Activated T-helper 1 cell treated with anti-CD3 and anti-CD28 coated beads, Interleukin-12 subunit alpha, Interleukin-12 subunit beta, Interleukin-2, Interleukin-4 antibody, amounts not matched to agents 30 ng/mL and 10 ng/mL and 1 ng/mL, durations not matched to agents 14 hours and 24 hours and 36 hours (primary cell): ENCODE measurements at regions of chr14 and their contacts with region 1.

Region 1: GRCh38 chr14:45426670-45427282 is 173.8 kb upstream of the MIS18BP1 start:
- DNase-seq: no peak
- H3K4me3 Mint-ChIP-seq: no peak overlapping the region
- H3K27ac Mint-ChIP-seq: no peak overlapping the region
- H3K4me1 Mint-ChIP-seq: no peaks in the 10 kb centered on the region
- H3K27me3 Mint-ChIP-seq: no peaks in the 10 kb centered on the region

Region 2: GRCh38 chr14:45267071-45267470 is 159.7 kb before region 1 on chr14:
- intact Hi-C with region 1: no loop called
- DNase-seq: no peak
- H3K4me3 Mint-ChIP-seq: no peak overlapping the region
- H3K27ac Mint-ChIP-seq: no peak overlapping the region
- H3K4me1 Mint-ChIP-seq: peaks cover 5% of the 10 kb centered on the region
- H3K27me3 Mint-ChIP-seq: peaks cover 7% of the 10 kb centered on the region

Region 3: DNA sequence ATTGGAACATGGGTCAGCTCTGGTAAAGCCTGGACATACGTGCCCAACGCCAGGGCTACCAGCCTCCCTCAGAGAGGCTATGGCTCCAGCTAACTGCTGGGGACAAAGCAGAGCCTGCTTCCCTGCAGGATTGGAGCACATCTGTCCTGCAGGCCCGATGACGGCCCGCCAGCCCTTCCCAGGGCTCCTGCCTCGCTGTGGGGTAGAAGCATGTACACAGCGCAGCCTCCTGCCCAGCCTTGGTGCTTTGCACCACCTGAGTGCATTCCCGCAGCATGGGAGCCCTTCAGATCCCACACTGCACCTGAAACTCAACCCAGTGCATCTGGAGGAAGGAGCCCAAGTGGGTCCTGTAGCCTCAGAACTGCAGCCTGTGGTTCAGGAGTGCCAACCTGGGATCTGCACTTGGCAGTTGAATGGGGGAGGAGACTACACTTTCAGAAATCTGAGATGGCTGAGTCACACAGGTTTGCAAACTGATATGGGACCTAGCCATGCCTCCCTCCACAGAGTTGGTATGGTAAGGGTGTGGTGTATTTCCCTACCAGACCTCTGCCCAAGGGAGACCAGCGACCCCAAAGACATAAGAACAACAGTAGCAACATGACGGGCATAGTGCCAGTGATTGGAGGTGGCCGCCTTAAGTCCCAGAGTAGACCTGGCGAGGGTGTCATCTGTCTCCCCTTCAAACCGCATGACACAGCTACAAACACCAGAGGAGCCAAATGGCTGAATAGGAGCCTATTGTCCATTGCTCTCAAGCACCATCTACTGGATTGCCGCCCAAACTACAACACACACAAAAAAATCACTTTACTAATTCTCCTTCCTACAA is 100.2 kb after region 1 on chr14:
- intact Hi-C with region 1: loop called (anchors 2 kb)
- DNase-seq: no peak
- H3K4me3 Mint-ChIP-seq: no peak overlapping the region
- H3K27ac Mint-ChIP-seq: no peak overlapping the region
- H3K4me1 Mint-ChIP-seq: no peaks in the 10 kb centered on the region
- H3K27me3 Mint-ChIP-seq: no peaks in the 10 kb centered on the region

Region 4: DNA sequence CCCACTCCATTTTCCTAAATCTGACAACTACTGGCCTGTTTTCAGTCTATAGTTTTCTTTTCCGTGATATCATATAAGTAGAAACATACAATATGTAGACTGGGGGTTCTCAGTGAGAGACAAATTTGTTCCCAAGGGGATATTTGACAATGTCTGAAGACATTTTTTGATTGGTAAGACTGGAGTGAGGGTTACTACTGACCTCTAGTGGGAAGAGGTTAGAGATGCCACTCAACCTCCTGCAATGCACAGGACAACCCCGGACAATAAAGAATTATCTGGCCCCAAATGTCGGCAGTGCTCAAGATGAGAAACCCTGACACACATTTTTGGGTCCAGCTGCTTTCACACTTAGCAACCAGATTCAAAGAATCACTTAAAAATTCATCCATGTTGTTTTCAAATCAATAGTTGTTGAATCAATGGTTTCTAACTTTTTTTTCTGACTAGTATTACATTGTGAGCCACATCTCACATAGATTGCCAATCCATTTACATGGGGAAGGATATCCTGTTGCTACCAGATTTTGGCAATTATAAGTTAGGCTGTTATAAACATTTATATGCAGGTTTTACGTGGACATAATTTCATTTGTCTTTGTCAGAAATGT is 917.7 kb after region 1 on chr14:
- intact Hi-C with region 1: loop called (anchors 5 kb)
- DNase-seq: no peak
- H3K4me3 Mint-ChIP-seq: no peak overlapping the region
- H3K27ac Mint-ChIP-seq: no peak overlapping the region
- H3K4me1 Mint-ChIP-seq: no peaks in the 10 kb centered on the region
- H3K27me3 Mint-ChIP-seq: no peaks in the 10 kb centered on the region